A673 (cell line): ENCODE measurements at regions of chr3 and their contacts with region 1.

Region 1: DNA sequence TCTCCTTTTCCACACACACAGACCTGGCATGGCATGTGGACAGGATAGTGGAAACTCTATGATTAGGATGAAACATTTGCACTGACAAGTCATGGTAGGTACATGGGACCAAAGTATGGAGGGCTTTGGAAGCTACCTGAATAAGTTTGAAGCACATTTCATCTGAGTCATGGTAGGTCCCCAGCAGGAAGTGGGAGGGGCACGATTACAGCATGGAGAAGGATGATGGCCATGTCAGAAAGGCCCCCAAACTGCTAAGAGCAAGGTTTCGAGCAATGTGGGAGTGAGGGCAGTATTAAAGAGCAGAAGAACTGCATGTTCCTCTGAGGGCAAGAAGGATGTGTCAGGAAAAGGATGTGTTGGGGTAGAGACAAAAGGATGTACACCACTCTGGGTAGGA is 51.5 kb upstream of the CSTA start:
- DNase-seq: no peak
- H3K4me3 ChIP-seq: no peak overlapping the region
- H3K27ac ChIP-seq: no peak overlapping the region
- H3K4me1 ChIP-seq: no peaks in the 10 kb centered on the region
- H3K27me3 ChIP-seq: peaks cover 21% of the 10 kb centered on the region
- CTCF ChIP-seq: no peak

Region 2: DNA sequence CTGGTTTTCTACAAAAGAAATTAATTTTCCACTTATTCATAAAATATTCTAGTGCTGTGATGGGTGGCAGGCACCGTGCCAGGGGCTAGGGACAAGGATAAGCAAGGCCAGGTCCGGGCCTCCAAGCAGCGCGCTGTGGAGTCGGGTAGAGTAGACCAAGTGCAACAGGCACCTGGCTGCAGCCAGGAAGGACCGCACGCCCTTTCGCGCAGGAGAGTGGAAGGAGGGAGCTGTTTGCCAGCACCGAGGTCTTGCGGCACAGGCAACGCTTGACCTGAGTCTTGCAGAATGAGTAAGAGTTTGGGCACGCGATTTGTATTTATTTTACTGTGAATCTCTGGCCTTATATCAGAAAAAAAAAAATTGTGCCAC is 90.0 kb before region 1 on chr3 and contains the start of gene CASR:
- CTCF ChIA-PET with region 1: no interaction called
- POLR2A ChIA-PET with region 1: interaction called, 25 read pairs
- intact Hi-C with region 1: no loop called
- DNase-seq: no peak
- H3K4me3 ChIP-seq: peak within 1 kb of the TSS; percentile 18
- H3K27ac ChIP-seq: no peak within 1 kb of the TSS
- H3K4me1 ChIP-seq: no peaks in the 10 kb centered on the region
- H3K27me3 ChIP-seq: peaks cover 91% of the 10 kb centered on the region
- CTCF ChIP-seq: no peak
- total RNA-seq, gene CASR: not detected in 2 replicates